ENCODE measurements at regions of chr16 and their contacts with region 1.

Region 1: DNA sequence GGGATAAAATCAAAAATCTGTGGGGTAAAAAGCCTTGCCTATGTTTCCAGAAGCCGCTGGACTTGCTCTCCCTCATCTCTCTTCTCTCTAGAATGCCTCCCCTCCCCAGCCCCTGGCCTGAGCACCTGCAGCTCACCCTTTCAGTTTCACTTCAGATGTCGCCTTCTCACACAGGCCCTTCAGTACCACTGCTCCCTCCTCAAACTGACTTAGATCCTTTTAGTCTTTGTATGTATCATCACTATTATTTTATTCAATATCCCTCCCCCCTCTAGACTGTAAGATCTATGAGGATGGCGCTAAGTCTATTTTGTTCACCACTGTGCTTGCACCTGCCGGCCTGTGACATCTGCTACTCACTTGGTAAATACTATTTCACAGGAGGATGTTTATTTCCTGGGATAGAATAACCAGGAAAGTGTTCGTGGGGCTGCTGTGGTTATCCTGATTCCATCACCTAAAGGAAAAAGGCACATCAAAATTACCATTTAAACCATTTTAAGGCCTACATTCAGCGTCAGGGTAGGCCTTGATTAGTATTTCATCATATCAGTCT is 122.3 kb downstream of the MRTFB start:
- DNase-seq: peak in 8 of 9 donors; percentile 27 to 51 (median 34)
- ATAC-seq: peak; percentile 67
- H3K4me3 ChIP-seq: peak overlapping the region; percentile 14
- H3K4me3 Mint-ChIP-seq: peak overlapping the region; percentile 71 to 97 (median 84)
- H3K27ac ChIP-seq: peak overlapping the region; percentile 74
- H3K27ac Mint-ChIP-seq: peak overlapping the region; percentile 87 to 96 (median 90)
- H3K4me1 ChIP-seq: peaks cover 5 to 46% of the 10 kb centered on the region in 2 donors
- H3K4me1 Mint-ChIP-seq: peaks cover 23 to 78% (median 74%) of the 10 kb centered on the region in 7 donors
- H3K27me3 ChIP-seq: no peaks in the 10 kb centered on the region
- H3K27me3 Mint-ChIP-seq: no peaks in the 10 kb centered on the region

Region 2: GRCh38 chr16:13742928-13743327 is 450.5 kb before region 1 on chr16:
- CTCF ChIA-PET with region 1: no interaction called
- POLR2A ChIA-PET with region 1: no interaction called
- intact Hi-C with region 1: no loop called
- DNase-seq: no peak
- ATAC-seq: no peak
- H3K4me3 ChIP-seq: no peak overlapping the region
- H3K4me3 Mint-ChIP-seq: no peak overlapping the region
- H3K27ac ChIP-seq: no peak overlapping the region
- H3K27ac Mint-ChIP-seq: no peak overlapping the region
- H3K4me1 ChIP-seq: no peaks in the 10 kb centered on the region
- H3K4me1 Mint-ChIP-seq: no peaks in the 10 kb centered on the region
- H3K27me3 ChIP-seq: no peaks in the 10 kb centered on the region
- H3K27me3 Mint-ChIP-seq: peaks cover 0 to 7% (median 0%) of the 10 kb centered on the region in 5 donors

Region 3: GRCh38 chr16:14070877-14071575 is 122.4 kb before region 1 on chr16 and contains the start of gene MRTFB:
- CTCF ChIA-PET with region 1: no interaction called
- POLR2A ChIA-PET with region 1: no interaction called
- intact Hi-C with region 1: loop called (anchors 5 to 10 kb)
- DNase-seq: peak; percentile 72 to 93 (median 85)
- ATAC-seq: peak; percentile 88
- H3K4me3 ChIP-seq: peak within 1 kb of the TSS; percentile 94
- H3K4me3 Mint-ChIP-seq: peak within 1 kb of the TSS; percentile 82 to 93 (median 90)
- H3K27ac ChIP-seq: peak within 1 kb of the TSS; percentile 79
- H3K27ac Mint-ChIP-seq: peak within 1 kb of the TSS; percentile 82 to 95 (median 87)
- H3K4me1 ChIP-seq: peaks cover 6 to 8% of the 10 kb centered on the region in 2 donors
- H3K4me1 Mint-ChIP-seq: peaks cover 8 to 35% (median 20%) of the 10 kb centered on the region in 7 donors
- H3K27me3 ChIP-seq: no peaks in the 10 kb centered on the region
- H3K27me3 Mint-ChIP-seq: peaks cover 0 to 6% (median 4%) of the 10 kb centered on the region in 5 donors
- total RNA-seq, gene MRTFB: 18.7 to 33.2 (median 27.6) TPM

Region 4: GRCh38 chr16:14125000-14125681 is 68.3 kb before region 1 on chr16:
- CTCF ChIA-PET with region 1: no interaction called
- POLR2A ChIA-PET with region 1: no interaction called
- intact Hi-C with region 1: no loop called
- DNase-seq: no peak
- ATAC-seq: no peak
- H3K4me3 ChIP-seq: no peak overlapping the region
- H3K4me3 Mint-ChIP-seq: no peak overlapping the region
- H3K27ac ChIP-seq: no peak overlapping the region
- H3K27ac Mint-ChIP-seq: no peak overlapping the region
- H3K4me1 ChIP-seq: no peaks in the 10 kb centered on the region
- H3K4me1 Mint-ChIP-seq: peaks cover 0 to 43% (median 25%) of the 10 kb centered on the region in 7 donors
- H3K27me3 ChIP-seq: no peaks in the 10 kb centered on the region
- H3K27me3 Mint-ChIP-seq: no peaks in the 10 kb centered on the region

Measured in naive thymus-derived CD4-positive, alpha-beta T cell (primary cell).